IMR-90 (cell line): ENCODE measurements at regions of chr2 and their contacts with region 1.

Region 1: DNA sequence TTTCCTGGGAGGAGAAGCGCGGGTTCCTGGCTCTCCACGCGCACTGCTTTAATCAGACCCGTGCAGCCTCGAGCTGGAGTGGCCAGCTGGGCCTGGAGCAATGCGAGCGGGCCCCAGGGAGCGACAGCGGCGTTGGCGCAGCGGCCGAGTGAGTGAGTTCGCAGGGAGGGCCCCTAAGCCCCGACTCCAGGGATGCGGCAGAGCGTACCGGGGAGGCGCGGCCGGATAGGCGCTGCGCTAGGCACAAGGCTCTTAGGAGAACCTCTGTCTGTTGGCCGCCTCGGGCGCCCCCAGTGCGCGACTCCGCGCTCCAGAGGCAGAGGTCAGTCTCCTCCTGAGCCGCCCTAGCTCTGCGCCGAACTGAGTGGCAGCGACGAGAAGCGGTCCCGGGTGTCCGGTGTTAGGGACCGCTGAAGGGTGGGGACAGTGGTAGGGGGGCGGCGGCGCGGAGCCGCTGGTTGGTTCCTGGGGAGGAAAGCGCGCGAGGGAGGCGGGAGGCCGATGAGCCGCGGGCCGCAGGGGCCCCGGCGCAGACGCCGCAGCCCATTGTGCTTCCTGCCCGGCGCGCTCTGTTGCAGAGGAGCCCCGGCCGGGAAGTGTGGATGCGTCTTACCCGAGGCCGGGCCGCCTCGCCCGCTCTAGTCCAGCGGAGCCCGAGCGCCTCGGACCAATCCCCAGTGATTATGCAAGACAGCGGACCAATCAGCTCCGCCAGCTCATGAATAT is 410 bp upstream of the DLX1 start:
- DNase-seq: peak; percentile 96
- ATAC-seq: peak; percentile 94
- H3K4me3 ChIP-seq: peak overlapping the region; percentile 56
- H3K27ac ChIP-seq: peak overlapping the region; percentile 3; the same call in 1 of the 2 replicates
- H3K4me1 ChIP-seq: no peaks in the 10 kb centered on the region; the same call in 1 of the 2 replicates
- H3K27me3 ChIP-seq: peaks cover 85% of the 10 kb centered on the region
- CTCF ChIP-seq: no peak
- POLR2A ChIP-seq: peak; percentile 81
- RAD21 ChIP-seq: no peak

Region 2: GRCh38 chr2:171999604-172000469 is 85.1 kb before region 1 on chr2 and contains the start of gene METAP1D:
- CTCF ChIA-PET with region 1: no interaction called
- POLR2A ChIA-PET with region 1: no interaction called
- dilution Hi-C with region 1: no loop called
- in situ Hi-C with region 1: no loop called
- intact Hi-C with region 1: loop called (anchors 5 kb)
- DNase-seq: peak; percentile 88
- ATAC-seq: peak; percentile 99
- H3K4me3 ChIP-seq: peak within 1 kb of the TSS; percentile 91
- H3K27ac ChIP-seq: peak within 1 kb of the TSS; percentile 33
- H3K4me1 ChIP-seq: no peaks in the 10 kb centered on the region
- H3K27me3 ChIP-seq: no peaks in the 10 kb centered on the region
- CTCF ChIP-seq: no peak; the same call in 1 of the 2 replicates
- POLR2A ChIP-seq: peak; percentile 80
- RAD21 ChIP-seq: no peak; the same call in 1 of the 2 replicates
- total RNA-seq, gene METAP1D: 3.4 and 4.2 TPM in 2 replicates

Region 3: GRCh38 chr2:172038604-172039003 is 46.3 kb before region 1 on chr2:
- CTCF ChIA-PET with region 1: no interaction called
- POLR2A ChIA-PET with region 1: no interaction called
- dilution Hi-C with region 1: no loop called
- in situ Hi-C with region 1: no loop called
- intact Hi-C with region 1: loop called (anchors 5 kb)
- DNase-seq: peak; percentile 38
- ATAC-seq: peak; percentile 14; the same call in 1 of the 2 replicates
- H3K4me3 ChIP-seq: no peak overlapping the region
- H3K27ac ChIP-seq: no peak overlapping the region
- H3K4me1 ChIP-seq: peaks cover 2% of the 10 kb centered on the region; the same call in 1 of the 2 replicates
- H3K27me3 ChIP-seq: no peaks in the 10 kb centered on the region
- CTCF ChIP-seq: no peak
- POLR2A ChIP-seq: no peak
- RAD21 ChIP-seq: no peak

Region 4: DNA sequence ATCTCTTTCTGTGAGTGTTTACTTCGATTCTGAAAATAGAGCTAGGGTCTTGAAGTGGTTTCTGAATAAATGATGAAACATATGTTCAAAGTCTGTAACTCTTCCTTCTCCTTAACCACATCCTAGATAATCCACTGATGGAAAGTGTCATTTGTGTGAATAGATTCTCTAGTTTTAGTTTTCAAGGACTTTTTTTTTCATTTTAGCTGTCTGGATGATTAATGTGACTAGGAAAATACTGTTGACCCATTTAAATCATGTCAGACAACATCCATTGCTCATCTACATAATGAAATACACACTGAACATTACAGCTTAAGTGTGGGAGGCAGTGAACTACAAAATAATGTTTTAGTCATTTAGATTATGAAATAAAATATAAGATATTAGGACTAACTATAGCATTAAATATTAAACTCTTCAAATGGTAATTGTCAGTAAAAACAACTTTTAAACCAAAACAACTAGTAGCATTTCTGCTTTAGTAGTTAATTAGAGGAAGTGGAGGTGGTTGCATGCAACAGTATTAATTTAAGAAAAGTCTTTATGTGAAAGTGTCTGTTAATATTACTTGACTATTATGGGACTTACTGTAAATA is 38.7 kb before region 1 on chr2:
- CTCF ChIA-PET with region 1: no interaction called
- POLR2A ChIA-PET with region 1: interaction called, 11 read pairs
- dilution Hi-C with region 1: no loop called
- in situ Hi-C with region 1: no loop called
- intact Hi-C with region 1: no loop called
- DNase-seq: no peak
- ATAC-seq: no peak
- H3K4me3 ChIP-seq: no peak overlapping the region
- H3K27ac ChIP-seq: no peak overlapping the region
- H3K4me1 ChIP-seq: peaks cover 5% of the 10 kb centered on the region
- H3K27me3 ChIP-seq: no peaks in the 10 kb centered on the region
- CTCF ChIP-seq: no peak
- POLR2A ChIP-seq: no peak
- RAD21 ChIP-seq: no peak